AG04449 (cell line): ENCODE measurements at regions of chr9 and their contacts with region 1.

Region 1: GRCh38 chr9:114250235-114250568 is 72.7 kb upstream of the ORM1 start:
- DNase-seq: peak; percentile 73
- H3K4me3 ChIP-seq: no peak overlapping the region
- CTCF ChIP-seq: no peak

Region 2: GRCh38 chr9:113798062-113799030 is 451.9 kb before region 1 on chr9:
- CTCF ChIA-PET with region 1: no interaction called
- POLR2A ChIA-PET with region 1: no interaction called
- DNase-seq: no peak
- H3K4me3 ChIP-seq: no peak overlapping the region
- CTCF ChIP-seq: no peak

Region 3: GRCh38 chr9:114238891-114239875 is 11.0 kb before region 1 on chr9:
- CTCF ChIA-PET with region 1: interaction called, 24 read pairs
- POLR2A ChIA-PET with region 1: no interaction called
- DNase-seq: no peak
- H3K4me3 ChIP-seq: no peak overlapping the region
- CTCF ChIP-seq: peak; percentile 61